ENCODE measurements at regions of chr9 and their contacts with region 1.

Region 1: DNA sequence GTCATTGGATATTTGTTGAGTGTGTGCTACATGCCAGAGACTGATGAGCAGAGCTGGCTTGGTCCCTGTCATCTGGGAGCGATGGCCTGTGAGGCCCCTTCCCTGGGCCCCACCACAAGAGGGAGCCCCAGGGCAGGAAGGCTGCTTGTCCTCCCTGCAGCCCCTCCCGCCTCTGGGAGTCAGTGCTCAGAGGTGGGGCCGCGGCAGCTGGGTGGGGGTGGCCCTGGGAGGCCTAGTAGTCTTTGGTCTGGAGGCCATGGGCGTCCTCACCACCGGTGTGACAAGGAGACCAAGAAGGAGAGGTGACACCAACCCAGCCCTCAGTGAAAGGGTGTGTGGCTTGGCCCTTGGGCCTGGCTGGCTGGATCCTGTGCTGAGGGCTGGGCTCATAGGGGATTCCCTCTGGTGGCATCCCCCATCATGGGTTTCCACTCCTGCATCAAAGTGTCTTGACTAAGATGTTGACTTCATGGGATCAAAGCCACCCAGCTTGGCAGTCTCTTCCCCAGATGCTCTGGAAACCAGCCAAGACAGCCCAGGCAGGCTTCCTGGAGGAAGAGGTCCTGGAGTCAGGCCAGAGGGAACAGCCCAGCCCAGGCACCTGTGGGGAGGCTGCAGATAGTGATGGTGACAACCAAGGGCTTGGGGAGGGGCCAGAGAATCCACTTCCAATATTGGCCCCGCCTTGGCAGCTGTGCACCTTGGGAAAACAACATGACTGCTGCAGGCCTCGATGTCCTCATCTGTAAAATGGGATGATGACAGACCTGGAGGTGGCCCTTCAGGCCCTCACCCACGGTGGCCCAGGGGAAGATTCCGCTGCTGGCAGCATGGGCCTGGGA is 166.7 kb downstream of the GAPVD1 start:
- DNase-seq: peak in 1 of 2 experiments; percentile 57
- H3K4me3 ChIP-seq: no peak overlapping the region
- H3K27ac ChIP-seq: no peak overlapping the region
- H3K4me1 ChIP-seq: no peaks in the 10 kb centered on the region
- H3K27me3 ChIP-seq: no peaks in the 10 kb centered on the region
- CTCF ChIP-seq: peak; percentile 73

Region 2: GRCh38 chr9:124940693-124941453 is 487.4 kb before region 1 on chr9 and contains the start of gene GOLGA1:
- CTCF ChIA-PET with region 1: no interaction called
- POLR2A ChIA-PET with region 1: no interaction called
- intact Hi-C with region 1: no loop called
- DNase-seq: peak; percentile 82 to 98
- H3K4me3 ChIP-seq: peak within 1 kb of the TSS; percentile 71
- H3K27ac ChIP-seq: peak within 1 kb of the TSS; percentile 83
- H3K4me1 ChIP-seq: peaks cover 19% of the 10 kb centered on the region
- H3K27me3 ChIP-seq: no peaks in the 10 kb centered on the region
- CTCF ChIP-seq: no peak
- total RNA-seq, gene GOLGA1: 23.0 and 26.2 TPM in 2 replicates

Region 3: DNA sequence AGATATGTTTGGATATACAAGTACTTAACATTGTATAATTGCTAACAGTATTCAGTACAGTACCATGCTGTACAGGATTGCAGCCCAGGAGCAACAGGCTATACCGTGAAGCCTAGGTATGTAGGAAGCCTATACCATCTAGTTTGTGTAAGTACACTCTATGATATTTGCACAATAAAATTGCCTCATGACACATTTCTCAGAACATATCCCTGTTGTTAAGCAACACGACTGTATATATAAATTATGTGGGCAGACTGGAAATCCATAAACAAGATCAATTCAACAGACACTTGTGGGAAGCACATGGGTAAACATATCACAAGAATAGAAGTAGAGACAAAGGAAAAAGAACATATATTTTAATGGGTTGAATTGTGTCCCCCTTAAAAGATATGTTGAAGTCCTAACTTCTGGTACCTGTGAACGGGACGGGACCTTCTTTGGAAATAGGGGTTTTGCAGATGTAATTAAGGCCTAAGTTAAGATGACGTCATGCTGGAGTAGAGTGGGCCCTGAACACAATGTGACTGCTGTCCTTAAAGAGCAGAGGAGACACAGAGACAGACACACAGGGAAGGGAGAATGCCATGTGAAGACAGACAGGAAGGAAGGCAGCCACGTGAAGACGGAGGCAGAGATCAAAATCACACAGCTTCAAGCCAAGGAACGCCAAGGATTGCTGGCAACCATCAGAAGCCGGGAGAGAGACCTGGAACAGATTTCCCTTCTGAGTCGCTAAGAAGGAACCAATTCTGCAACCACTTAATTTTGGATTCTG is 361.3 kb before region 1 on chr9:
- CTCF ChIA-PET with region 1: no interaction called
- POLR2A ChIA-PET with region 1: no interaction called
- intact Hi-C with region 1: no loop called
- DNase-seq: no peak
- H3K4me3 ChIP-seq: no peak overlapping the region
- H3K27ac ChIP-seq: no peak overlapping the region
- H3K4me1 ChIP-seq: no peaks in the 10 kb centered on the region
- H3K27me3 ChIP-seq: no peaks in the 10 kb centered on the region
- CTCF ChIP-seq: no peak

Region 4: GRCh38 chr9:125356032-125356431 is 72.2 kb before region 1 on chr9:
- CTCF ChIA-PET with region 1: no interaction called
- POLR2A ChIA-PET with region 1: no interaction called
- intact Hi-C with region 1: no loop called
- DNase-seq: no peak
- H3K4me3 ChIP-seq: no peak overlapping the region
- H3K27ac ChIP-seq: no peak overlapping the region
- H3K4me1 ChIP-seq: no peaks in the 10 kb centered on the region
- H3K27me3 ChIP-seq: no peaks in the 10 kb centered on the region
- CTCF ChIP-seq: no peak

Region 5: GRCh38 chr9:125746017-125746773 is 317.9 kb after region 1 on chr9:
- CTCF ChIA-PET with region 1: no interaction called
- POLR2A ChIA-PET with region 1: no interaction called
- intact Hi-C with region 1: loop called (anchors 10 kb)
- DNase-seq: peak; percentile 82 to 97
- H3K4me3 ChIP-seq: peak overlapping the region; percentile 56
- H3K27ac ChIP-seq: no peak overlapping the region
- H3K4me1 ChIP-seq: peaks cover 10% of the 10 kb centered on the region; the same call in 1 of the 2 replicates
- H3K27me3 ChIP-seq: no peaks in the 10 kb centered on the region
- CTCF ChIP-seq: no peak

Region 6: DNA sequence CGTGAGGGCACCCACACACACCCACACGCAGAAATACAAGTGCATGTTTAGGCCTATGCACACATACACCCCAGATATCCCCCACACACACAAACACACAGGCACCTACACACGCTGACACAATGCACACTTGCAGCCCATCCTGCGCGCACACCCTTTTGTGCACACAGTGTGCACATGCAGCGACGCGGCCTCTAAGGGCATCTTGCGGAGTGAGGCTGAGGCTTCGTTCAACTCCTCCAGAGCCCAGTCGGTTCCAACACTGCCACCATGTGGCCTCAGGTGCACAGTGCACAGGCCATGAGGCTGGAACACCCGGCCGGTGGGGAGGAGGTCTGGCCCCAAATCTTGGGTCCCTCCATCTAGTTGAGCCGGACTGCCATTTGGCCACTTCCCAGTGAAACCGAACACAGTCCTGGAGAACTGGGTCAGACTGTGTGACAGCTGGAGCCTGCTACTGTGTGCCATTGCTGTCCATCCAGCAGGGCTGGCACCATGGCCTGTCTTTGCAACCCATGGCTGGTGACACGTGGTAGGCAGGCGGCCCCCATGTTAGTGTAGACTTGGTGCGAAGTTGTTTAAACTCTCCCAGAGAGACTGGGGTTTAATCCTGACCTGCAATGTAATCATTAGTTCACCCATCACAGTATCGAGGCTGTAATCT is 800.6 kb after region 1 on chr9:
- CTCF ChIA-PET with region 1: no interaction called
- POLR2A ChIA-PET with region 1: no interaction called
- intact Hi-C with region 1: loop called (anchors 5 kb)
- DNase-seq: peak; percentile 44 to 70
- H3K4me3 ChIP-seq: no peak overlapping the region
- H3K27ac ChIP-seq: no peak overlapping the region
- H3K4me1 ChIP-seq: no peaks in the 10 kb centered on the region
- H3K27me3 ChIP-seq: peaks cover 85% of the 10 kb centered on the region
- CTCF ChIP-seq: peak; percentile 91

Region 7: GRCh38 chr9:126490871-126491567 is 1062.7 kb after region 1 on chr9:
- CTCF ChIA-PET with region 1: no interaction called
- POLR2A ChIA-PET with region 1: no interaction called
- intact Hi-C with region 1: loop called (anchors 1 kb)
- DNase-seq: peak; percentile 50 to 53
- H3K4me3 ChIP-seq: no peak overlapping the region
- H3K27ac ChIP-seq: no peak overlapping the region
- H3K4me1 ChIP-seq: no peaks in the 10 kb centered on the region
- H3K27me3 ChIP-seq: no peaks in the 10 kb centered on the region
- CTCF ChIP-seq: peak; percentile 95

Measured in PC-9 (cell line).